Breast epithelium (tissue), 4 donors: ENCODE measurements at regions of chr1 and their contacts with region 1.

Region 1: GRCh38 chr1:4071653-4072052 is 171.6 kb upstream of the C1orf174 start:
- DNase-seq: peak in 1 of 2 donors; percentile 15
- H3K4me3 ChIP-seq: no peak overlapping the region
- H3K27ac ChIP-seq: no peak overlapping the region
- H3K4me1 ChIP-seq: no peaks in the 10 kb centered on the region
- H3K27me3 ChIP-seq: peaks cover 0 to 17% of the 10 kb centered on the region in 2 donors
- CTCF ChIP-seq: no peak
- POLR2A ChIP-seq: no peak

Region 2: DNA sequence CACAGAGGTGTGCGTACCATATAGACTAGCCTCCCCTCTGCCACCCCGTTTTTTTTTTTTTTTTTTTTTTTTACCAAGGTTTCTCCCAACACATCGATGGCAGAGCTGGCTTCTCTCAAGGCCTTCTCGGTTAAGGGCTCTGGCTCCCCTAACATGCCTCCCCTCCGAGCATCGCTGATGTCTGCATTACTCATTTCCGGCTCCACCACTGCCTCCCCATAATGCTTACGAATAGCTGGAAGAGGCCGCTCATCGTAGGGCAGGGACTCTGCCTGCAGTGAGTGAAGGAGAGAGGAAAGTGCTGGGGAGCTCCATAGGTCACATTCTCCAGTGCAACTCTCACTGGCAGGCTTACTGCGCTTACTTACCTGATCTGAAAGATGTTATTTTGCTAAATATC is 235.2 kb before region 1 on chr1:
- intact Hi-C with region 1: no loop called
- DNase-seq: no peak
- H3K4me3 ChIP-seq: no peak overlapping the region
- H3K27ac ChIP-seq: no peak overlapping the region
- H3K4me1 ChIP-seq: no peaks in the 10 kb centered on the region
- H3K27me3 ChIP-seq: no peaks in the 10 kb centered on the region
- CTCF ChIP-seq: no peak
- POLR2A ChIP-seq: no peak

Region 3: DNA sequence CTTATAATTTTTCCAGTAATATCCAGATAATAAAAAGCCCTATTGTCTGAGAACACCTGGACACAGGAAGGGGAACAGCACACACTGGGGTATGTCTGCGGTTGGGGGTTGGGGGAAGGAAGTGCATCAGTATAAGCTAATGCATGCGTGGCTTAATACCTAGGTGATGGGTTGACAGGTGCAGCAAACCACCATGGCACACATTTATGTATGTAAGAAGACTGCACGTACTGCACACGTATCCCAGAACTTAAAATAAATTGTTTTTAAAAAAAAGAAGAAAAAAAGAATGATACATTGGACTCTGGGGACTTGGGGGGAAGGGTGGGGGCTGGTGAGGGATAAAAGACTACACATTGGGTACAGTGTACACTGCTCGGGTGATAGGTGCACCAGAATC is 26.7 kb before region 1 on chr1:
- intact Hi-C with region 1: loop called (anchors 1 kb)
- DNase-seq: no peak
- H3K4me3 ChIP-seq: no peak overlapping the region
- H3K27ac ChIP-seq: no peak overlapping the region
- H3K4me1 ChIP-seq: no peaks in the 10 kb centered on the region
- H3K27me3 ChIP-seq: peaks cover 0 to 24% of the 10 kb centered on the region in 2 donors
- CTCF ChIP-seq: no peak
- POLR2A ChIP-seq: no peak

Region 4: DNA sequence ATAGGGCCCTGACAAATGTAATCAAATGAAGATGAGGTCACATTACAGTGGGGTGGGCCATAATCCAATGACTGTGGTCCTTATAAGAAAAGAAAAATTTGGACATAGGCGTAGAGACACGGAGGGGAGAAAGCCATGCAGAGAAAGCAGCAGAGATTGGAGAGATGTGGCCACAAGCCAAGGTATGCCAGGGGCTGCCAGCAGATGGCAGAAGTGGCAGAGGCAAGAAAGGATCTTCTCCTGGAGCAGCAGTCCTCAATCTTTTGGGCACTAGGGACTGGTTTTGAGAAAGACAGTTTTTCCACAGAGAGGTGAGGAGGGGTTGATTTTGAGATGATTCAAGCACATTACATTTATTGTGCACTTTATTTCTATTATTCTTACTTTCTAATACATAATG is 1565.5 kb after region 1 on chr1:
- intact Hi-C with region 1: loop called (anchors 5 kb)
- DNase-seq: no peak
- H3K4me3 ChIP-seq: no peak overlapping the region
- H3K27ac ChIP-seq: no peak overlapping the region
- H3K4me1 ChIP-seq: no peaks in the 10 kb centered on the region
- H3K27me3 ChIP-seq: peaks cover 0 to 5% of the 10 kb centered on the region in 2 donors
- CTCF ChIP-seq: no peak
- POLR2A ChIP-seq: no peak